Activated CD4-positive, alpha-beta T cell treated with anti-CD3 and anti-CD28 coated beads for 36 hours (primary cell): ENCODE measurements at regions of chr3 and their contacts with region 1.

Region 1: DNA sequence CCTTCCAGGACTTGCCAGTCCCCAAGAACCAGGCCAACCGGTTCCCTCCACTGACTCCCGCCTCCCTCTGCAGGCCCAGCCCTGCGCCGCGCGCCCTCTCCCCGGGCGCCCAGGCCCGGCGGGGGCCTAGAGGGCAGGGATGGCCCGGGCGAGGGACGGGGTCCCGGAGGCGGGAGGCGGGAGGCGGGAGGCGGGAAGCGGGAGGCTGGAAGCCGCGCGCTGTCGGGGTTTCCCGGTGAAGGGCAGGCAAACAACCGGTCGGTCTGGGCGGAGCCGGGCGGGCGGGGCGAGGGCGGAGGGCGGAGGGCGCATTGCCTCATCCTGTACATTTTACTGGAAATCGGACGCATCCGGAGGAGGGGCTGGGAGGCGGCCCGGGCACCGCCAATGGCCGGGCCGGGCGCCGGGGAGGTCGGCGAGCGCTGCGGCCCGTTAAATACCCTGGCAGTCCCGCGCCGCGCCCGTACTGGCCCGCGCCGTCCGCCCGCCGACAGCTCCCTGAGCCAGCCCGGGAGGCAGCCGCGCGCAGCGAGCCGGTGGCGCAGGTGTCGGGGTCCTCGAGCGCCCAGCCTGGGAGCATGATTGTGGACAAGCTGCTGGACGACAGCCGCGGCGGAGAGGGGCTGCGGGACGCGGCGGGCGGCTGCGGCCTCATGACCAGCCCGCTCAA is at the start of gene NFKBIZ:
- DNase-seq: peak; percentile 96
- ATAC-seq: peak; percentile 70
- H3K4me3 Mint-ChIP-seq: peak within 1 kb of the TSS; percentile 98
- H3K27ac Mint-ChIP-seq: peak within 1 kb of the TSS; percentile 100
- H3K4me1 Mint-ChIP-seq: peaks cover 46% of the 10 kb centered on the region
- H3K27me3 Mint-ChIP-seq: no peaks in the 10 kb centered on the region
- total RNA-seq, gene NFKBIZ: 47.8 to 56.7 TPM

Region 2: GRCh38 chr3:101573449-101574387 is 275.5 kb before region 1 on chr3 and contains the start of gene PCNP:
- CTCF ChIA-PET with region 1: no interaction called
- POLR2A ChIA-PET with region 1: no interaction called
- intact Hi-C with region 1: loop called in 1 of 2 experiments (anchors 5 kb)
- DNase-seq: peak; percentile 100
- ATAC-seq: peak; percentile 78
- H3K4me3 Mint-ChIP-seq: peak within 1 kb of the TSS; percentile 85
- H3K27ac Mint-ChIP-seq: peak within 1 kb of the TSS; percentile 94
- H3K4me1 Mint-ChIP-seq: peaks cover 60% of the 10 kb centered on the region
- H3K27me3 Mint-ChIP-seq: no peaks in the 10 kb centered on the region
- total RNA-seq, gene PCNP: 213 to 264 TPM

Region 3: DNA sequence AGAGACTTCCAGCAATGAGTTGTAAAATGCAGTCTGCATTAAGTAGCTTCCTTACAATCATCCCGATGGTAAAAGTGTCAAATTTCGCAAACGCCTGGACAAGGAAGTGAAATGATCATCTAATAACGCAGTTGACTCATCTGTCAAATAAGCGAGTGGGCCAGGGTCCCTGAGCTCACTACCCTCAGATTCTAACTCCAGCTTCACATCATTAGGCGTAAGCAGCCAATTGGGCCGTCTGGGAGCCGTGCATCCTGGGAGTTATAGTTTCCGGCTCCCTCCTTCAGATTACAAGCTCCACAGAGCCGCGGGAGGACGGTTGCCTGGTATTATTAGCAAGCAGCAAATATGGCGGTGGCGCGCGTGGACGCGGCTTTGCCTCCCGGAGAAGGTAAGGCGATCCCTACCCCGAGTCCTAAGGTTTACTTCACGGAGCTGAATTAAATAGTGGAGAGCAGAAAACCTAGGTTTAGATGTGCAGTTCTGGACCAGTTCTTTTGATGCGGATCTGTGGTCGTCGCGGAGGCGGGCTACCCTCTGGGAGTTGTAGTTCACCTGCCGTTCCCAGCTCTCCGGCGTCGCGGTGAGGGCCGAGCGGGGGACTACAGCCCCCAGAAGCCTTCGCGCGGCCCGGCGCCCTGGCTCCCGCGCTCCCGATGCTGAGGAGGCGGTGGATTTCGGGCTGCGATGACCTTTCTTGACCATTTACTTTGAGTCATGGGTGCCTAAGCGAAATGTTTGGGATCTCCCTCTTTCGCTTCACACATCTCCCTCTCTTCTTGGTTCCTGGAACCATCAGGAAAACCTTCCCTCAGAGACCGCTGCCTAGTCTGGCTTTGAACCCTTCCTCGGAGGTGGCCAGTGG is 124.6 kb before region 1 on chr3 and contains the start of gene CEP97:
- CTCF ChIA-PET with region 1: no interaction called
- POLR2A ChIA-PET with region 1: interaction called, 6 read pairs
- intact Hi-C with region 1: loop called in 1 of 2 experiments (anchors 1 kb)
- DNase-seq: peak; percentile 95
- ATAC-seq: peak; percentile 93
- H3K4me3 Mint-ChIP-seq: peak within 1 kb of the TSS; percentile 97
- H3K27ac Mint-ChIP-seq: peak within 1 kb of the TSS; percentile 97
- H3K4me1 Mint-ChIP-seq: peaks cover 46% of the 10 kb centered on the region
- H3K27me3 Mint-ChIP-seq: no peaks in the 10 kb centered on the region
- total RNA-seq, gene CEP97: 18.1 to 20.0 TPM

Region 4: DNA sequence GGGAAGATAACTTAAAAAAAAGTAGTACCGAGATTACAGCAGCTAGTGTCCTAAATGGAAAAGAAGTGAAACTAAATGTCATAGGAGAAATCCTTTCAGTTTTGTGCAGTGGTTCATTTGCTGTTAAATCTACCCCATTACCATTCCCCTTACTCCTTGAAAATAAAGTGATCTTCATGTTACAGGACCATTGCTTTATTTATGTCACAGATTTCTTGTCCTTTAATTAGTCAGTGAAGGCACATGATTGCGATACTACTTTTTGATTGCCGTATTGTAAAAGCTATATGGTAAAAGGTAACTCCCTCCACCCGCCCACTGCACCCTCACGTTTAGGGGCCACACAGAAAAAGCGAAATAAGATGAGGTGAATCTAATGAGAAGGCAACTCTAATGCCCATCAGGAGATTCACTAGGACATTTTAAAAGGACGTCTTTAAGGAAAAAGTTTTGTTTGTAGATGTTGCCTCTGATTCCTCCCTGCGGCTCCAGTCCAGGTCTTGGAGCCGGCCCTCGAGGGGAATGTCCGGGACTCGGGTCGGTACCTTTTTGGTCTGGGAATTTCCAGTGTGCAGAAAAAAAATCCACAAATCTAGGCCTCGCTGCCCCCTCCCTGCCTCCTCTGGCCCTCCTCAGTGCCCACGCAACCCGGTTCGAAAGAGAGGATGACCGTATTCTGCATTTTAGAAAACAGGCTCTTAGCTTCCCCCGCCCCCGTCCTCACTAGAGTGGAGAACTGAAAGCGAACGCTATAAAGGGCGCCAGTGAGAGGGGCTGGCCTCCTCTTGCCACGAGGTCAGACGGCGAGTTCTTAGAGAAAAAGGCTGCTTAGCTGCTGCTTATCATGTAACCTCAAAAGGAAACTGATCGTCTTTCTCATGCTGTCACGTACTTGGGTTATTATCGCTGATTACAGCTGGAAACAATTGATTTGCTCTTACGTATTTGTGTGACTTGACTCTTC is 21.7 kb before region 1 on chr3:
- CTCF ChIA-PET with region 1: interaction called, 8 read pairs
- POLR2A ChIA-PET with region 1: interaction called, 61 read pairs
- intact Hi-C with region 1: loop called (anchors 1 kb)
- DNase-seq: peak; percentile 94
- ATAC-seq: peak; percentile 86
- H3K4me3 Mint-ChIP-seq: peak overlapping the region; percentile 77
- H3K27ac Mint-ChIP-seq: peak overlapping the region; percentile 96
- H3K4me1 Mint-ChIP-seq: peaks cover 60% of the 10 kb centered on the region
- H3K27me3 Mint-ChIP-seq: no peaks in the 10 kb centered on the region

Region 5: GRCh38 chr3:101988591-101988990 is 139.4 kb after region 1 on chr3:
- CTCF ChIA-PET with region 1: no interaction called
- POLR2A ChIA-PET with region 1: interaction called, 5 read pairs
- intact Hi-C with region 1: loop called (anchors 1 to 2 kb)
- DNase-seq: peak; percentile 29
- ATAC-seq: peak; percentile 74
- H3K4me3 Mint-ChIP-seq: no peak overlapping the region
- H3K27ac Mint-ChIP-seq: no peak overlapping the region
- H3K4me1 Mint-ChIP-seq: peaks cover 19% of the 10 kb centered on the region
- H3K27me3 Mint-ChIP-seq: no peaks in the 10 kb centered on the region

Region 6: DNA sequence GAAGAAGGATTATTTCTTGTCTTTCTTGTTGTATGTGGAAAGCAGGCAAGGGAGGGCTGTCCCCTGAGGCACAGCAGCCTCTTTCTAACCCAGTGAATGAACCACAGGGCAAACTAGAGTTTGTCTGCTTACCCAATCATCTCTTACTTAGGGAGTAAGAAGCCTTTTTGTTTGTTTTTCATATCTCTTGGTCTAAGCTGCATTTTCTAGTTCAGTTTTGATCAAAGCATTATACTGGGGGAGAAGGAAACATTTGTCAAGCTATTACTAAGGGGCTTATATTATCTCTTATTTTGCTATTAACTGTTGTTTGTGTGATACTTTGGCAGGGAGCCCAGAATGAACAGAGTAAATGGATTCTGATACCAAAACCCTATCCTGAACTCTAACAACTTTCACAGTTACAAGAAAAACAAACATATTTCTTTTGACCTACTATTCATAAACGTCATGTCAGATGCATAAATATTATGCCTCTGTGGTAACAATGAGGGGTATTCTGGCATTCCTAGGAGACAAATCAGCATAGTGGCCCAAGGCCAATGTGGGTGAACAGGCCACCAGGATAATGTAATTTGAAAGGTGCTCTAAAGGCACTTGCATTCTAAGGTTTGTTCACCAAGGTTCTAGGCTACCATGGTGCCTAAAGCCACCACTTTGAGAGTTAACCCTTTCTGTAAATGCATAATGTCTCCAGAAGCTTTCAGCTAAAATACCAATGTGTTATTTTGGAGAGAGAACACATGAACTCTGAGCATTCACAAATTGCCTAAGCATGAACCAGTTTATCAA is 314.0 kb after region 1 on chr3:
- CTCF ChIA-PET with region 1: no interaction called
- POLR2A ChIA-PET with region 1: no interaction called
- intact Hi-C with region 1: loop called (anchors 2 kb)
- DNase-seq: no peak
- ATAC-seq: peak; percentile 22
- H3K4me3 Mint-ChIP-seq: no peak overlapping the region
- H3K27ac Mint-ChIP-seq: peak overlapping the region; percentile 15
- H3K4me1 Mint-ChIP-seq: peaks cover 23% of the 10 kb centered on the region
- H3K27me3 Mint-ChIP-seq: no peaks in the 10 kb centered on the region